Activated CD8-positive, alpha-beta T cell treated with anti-CD3 and anti-CD28 coated beads, Interleukin-2, amount 10 ng/mL, durations not matched to agents 7 days and 5 days (primary cell): ENCODE measurements at regions of chr1 and their contacts with region 1.

Region 1: GRCh38 chr1:153545067-153546055 is at the start of gene S100A4:
- DNase-seq: peak; percentile 95
- ATAC-seq: peak; percentile 84
- H3K4me3 Mint-ChIP-seq: peak within 1 kb of the TSS; percentile 93
- H3K27ac Mint-ChIP-seq: peak within 1 kb of the TSS; percentile 97
- H3K4me1 Mint-ChIP-seq: peaks cover 83% of the 10 kb centered on the region
- H3K27me3 Mint-ChIP-seq: peaks cover 3% of the 10 kb centered on the region
- total RNA-seq, gene S100A4: 628 to 665 TPM

Region 2: DNA sequence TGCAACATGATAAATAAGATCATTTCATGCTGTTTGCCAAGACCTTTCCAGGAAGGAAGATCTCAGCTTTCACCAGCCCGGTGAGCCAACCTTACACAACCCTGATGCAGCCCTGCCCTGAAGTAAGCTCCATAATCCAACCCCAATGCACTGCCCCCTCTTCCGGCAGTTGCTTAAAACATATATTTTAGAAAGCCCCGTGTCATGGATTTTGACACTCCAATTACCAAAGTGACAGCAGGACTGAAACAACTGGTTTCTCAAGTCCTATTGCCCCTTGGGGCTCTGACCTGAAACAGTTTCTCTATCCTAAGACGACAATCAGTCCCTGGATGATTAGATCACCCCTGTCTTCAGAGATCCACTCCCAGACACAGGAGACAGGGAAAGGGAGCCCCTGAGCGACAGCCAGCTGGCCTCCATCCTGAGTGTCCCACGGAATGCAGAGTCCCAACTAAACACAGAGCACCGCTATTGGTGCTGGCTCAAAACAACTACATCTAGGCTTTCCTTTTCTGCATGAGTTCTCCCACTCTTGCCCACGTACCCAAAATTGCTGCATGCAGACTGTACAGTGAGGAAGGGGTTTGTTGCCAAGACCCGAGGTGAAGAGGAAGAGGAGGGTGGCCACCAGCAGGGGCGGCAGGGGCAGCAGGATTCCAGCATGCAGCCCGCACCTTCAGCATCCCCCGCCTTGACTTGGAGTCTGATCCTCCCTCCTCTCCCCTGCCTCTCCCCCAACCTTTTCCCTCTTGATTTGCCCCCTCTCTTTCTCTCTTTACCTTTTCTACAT is 179.9 kb before region 1 on chr1:
- CTCF ChIA-PET with region 1: no interaction called
- POLR2A ChIA-PET with region 1: no interaction called
- DNase-seq: no peak
- ATAC-seq: no peak
- H3K4me3 Mint-ChIP-seq: no peak overlapping the region
- H3K27ac Mint-ChIP-seq: no peak overlapping the region
- H3K4me1 Mint-ChIP-seq: no peaks in the 10 kb centered on the region
- H3K27me3 Mint-ChIP-seq: peaks cover 7% of the 10 kb centered on the region

Region 3: DNA sequence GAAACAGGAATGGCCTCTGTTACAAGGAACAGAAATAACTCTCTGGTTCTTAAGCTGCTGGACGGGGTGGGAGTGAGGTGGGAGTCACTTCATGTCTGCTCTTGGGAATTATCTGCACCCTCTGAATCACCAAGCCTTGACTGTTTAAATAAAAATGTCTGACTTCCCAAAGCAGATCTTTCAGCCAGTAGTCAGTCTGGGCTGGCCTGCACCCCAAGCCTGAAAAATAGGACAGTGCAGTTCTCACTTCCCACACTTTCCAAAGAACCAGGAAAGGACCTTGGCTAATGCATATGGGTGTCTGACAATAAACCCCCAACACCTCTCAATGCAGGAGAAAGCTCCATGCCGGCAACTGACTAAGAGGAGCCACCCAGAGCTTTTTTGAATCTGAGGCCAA is 85.7 kb before region 1 on chr1:
- CTCF ChIA-PET with region 1: no interaction called
- POLR2A ChIA-PET with region 1: no interaction called
- DNase-seq: no peak
- ATAC-seq: no peak
- H3K4me3 Mint-ChIP-seq: no peak overlapping the region
- H3K27ac Mint-ChIP-seq: no peak overlapping the region
- H3K4me1 Mint-ChIP-seq: no peaks in the 10 kb centered on the region
- H3K27me3 Mint-ChIP-seq: peaks cover 3% of the 10 kb centered on the region

Region 4: GRCh38 chr1:153566440-153567379 is 21.3 kb after region 1 on chr1:
- CTCF ChIA-PET with region 1: interaction called, 23 read pairs
- POLR2A ChIA-PET with region 1: interaction called, 16 read pairs
- DNase-seq: peak; percentile 83
- ATAC-seq: peak; percentile 82
- H3K4me3 Mint-ChIP-seq: no peak overlapping the region
- H3K27ac Mint-ChIP-seq: peak overlapping the region; percentile 92
- H3K4me1 Mint-ChIP-seq: peaks cover 38% of the 10 kb centered on the region
- H3K27me3 Mint-ChIP-seq: peaks cover 11% of the 10 kb centered on the region